Right cardiac atrium (tissue), 5 donors: ENCODE measurements at regions of chr3 and their contacts with region 1.

Region 1: GRCh38 chr3:49802719-49803464 is at the start of gene INKA1:
- DNase-seq: peak; percentile 91 to 96 (median 95)
- ATAC-seq: peak; percentile 82 to 84
- H3K4me3 ChIP-seq: peak within 1 kb of the TSS; percentile 49
- H3K27ac ChIP-seq: peak within 1 kb of the TSS; percentile 79
- H3K4me1 ChIP-seq: peaks cover 33% of the 10 kb centered on the region
- H3K27me3 ChIP-seq: no peaks in the 10 kb centered on the region
- total RNA-seq, gene INKA1: 2.2 to 6.4 (median 4.6) TPM

Region 2: GRCh38 chr3:49727154-49727923 is 75.6 kb before region 1 on chr3:
- intact Hi-C with region 1: no loop called
- DNase-seq: peak in 1 of 3 donors; percentile 41
- ATAC-seq: no peak
- H3K4me3 ChIP-seq: no peak overlapping the region
- H3K27ac ChIP-seq: no peak overlapping the region
- H3K4me1 ChIP-seq: peaks cover 12% of the 10 kb centered on the region
- H3K27me3 ChIP-seq: no peaks in the 10 kb centered on the region

Region 3: DNA sequence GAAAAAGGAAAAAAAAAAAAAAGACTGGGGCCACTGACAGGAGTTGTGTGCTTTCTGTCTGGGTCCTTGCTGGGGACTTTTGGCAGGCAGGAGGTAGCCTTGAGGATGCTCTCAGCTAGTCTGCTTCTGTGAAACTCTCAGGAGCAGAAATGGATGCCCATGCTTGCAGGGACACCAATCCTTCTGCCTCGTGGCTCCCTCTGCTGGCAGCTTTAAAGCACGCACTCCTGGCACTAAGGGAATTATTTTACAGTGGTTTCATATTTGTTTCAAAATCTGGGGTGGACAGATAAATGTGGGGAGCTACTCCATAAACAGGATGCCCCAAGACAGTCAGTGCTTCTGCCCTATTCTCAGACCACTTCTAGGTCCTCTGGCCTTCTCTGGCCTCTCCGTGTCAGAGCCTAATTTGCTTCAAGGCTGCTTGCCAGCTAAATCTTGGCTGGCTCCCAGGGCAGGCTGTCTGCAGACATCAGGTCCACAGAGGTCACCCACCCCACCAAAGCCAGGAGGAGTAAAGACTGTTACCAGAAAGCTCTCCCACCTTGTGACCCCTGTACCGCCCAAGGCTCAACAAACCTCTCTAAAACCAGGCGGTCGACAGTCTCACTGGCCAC is 36.4 kb after region 1 on chr3:
- intact Hi-C with region 1: loop called (anchors 1 to 5 kb)
- DNase-seq: peak; percentile 75 to 91 (median 87)
- ATAC-seq: peak; percentile 84 to 86
- H3K4me3 ChIP-seq: no peak overlapping the region
- H3K27ac ChIP-seq: no peak overlapping the region
- H3K4me1 ChIP-seq: peaks cover 4% of the 10 kb centered on the region
- H3K27me3 ChIP-seq: no peaks in the 10 kb centered on the region